Heart left ventricle (tissue), 16 donors: ENCODE measurements at regions of chr3 and their contacts with region 1.

Region 1: DNA sequence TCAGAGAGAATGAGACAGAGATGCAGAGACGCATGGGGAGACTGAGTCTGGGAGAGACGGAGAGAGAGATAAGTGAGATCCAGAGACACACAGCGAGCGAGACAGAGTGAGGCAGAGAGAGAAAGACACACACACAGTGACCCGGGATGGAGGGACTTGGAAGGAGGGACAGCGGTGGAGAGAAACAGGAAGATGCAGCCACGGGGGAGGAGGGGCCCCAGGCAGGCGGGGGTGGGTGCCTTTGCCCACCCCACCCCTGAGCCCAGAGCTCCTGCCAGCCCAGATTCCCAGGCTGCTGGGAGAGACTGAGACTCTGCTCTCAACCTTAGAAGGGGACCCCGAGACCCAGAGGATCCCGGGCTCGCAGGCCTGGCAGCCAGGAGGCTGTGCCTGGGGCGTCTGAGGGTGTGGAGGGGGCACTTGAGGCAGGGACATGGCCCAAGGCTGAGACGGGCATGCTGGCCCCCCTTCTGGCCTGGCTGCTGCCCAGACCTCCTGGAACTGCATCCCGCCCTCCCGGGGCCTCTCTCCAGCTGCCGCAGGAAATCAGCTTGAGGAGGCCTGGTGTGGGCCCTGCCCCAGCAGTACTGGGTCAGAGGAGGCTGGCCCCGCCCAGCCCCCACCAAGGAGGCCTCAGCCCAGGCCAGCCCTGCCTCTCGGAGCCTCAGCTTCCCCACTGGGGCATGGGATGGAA is 18.1 kb downstream of the H1-8 start:
- DNase-seq: peak; percentile 86 to 94 (median 89)
- ATAC-seq: peak; percentile 73 to 88 (median 81)
- H3K4me3 ChIP-seq: peak overlapping the region in 2 of 12 donors; percentile 1 to 8
- H3K27ac ChIP-seq: peak overlapping the region; percentile 74 to 90 (median 80)
- H3K4me1 ChIP-seq: peaks cover 19 to 97% (median 71%) of the 10 kb centered on the region in 12 donors
- H3K27me3 ChIP-seq: no peaks in the 10 kb centered on the region
- CTCF ChIP-seq: no peak
- POLR2A ChIP-seq: no peak

Region 2: GRCh38 chr3:129596194-129597086 is 35.4 kb after region 1 on chr3:
- intact Hi-C with region 1: loop called in 6 of 10 experiments (anchors 5 kb)
- DNase-seq: peak; percentile 93 to 96 (median 94)
- ATAC-seq: peak; percentile 70 to 86 (median 83)
- H3K4me3 ChIP-seq: peak overlapping the region in 11 of 12 donors; percentile 7 to 99 (median 34)
- H3K27ac ChIP-seq: peak overlapping the region; percentile 75 to 97 (median 90)
- H3K4me1 ChIP-seq: peaks cover 31 to 100% (median 95%) of the 10 kb centered on the region in 12 donors
- H3K27me3 ChIP-seq: no peaks in the 10 kb centered on the region
- CTCF ChIP-seq: peak in 2 of 12 donors; percentile 1 to 5
- POLR2A ChIP-seq: no peak

Region 3: GRCh38 chr3:129606636-129607390 is 45.8 kb after region 1 on chr3 and contains the start of gene PLXND1:
- intact Hi-C with region 1: loop called in 6 of 10 experiments (anchors 5 kb)
- DNase-seq: peak; percentile 84 to 92 (median 86)
- ATAC-seq: peak; percentile 35 to 75 (median 68)
- H3K4me3 ChIP-seq: peak within 1 kb of the TSS; percentile 61 to 99 (median 82)
- H3K27ac ChIP-seq: peak within 1 kb of the TSS; percentile 88 to 98 (median 96)
- H3K4me1 ChIP-seq: peaks cover 21 to 86% (median 60%) of the 10 kb centered on the region in 12 donors
- H3K27me3 ChIP-seq: peaks cover 0 to 12% (median 3%) of the 10 kb centered on the region in 9 donors
- CTCF ChIP-seq: no peak
- POLR2A ChIP-seq: peak in 1 of 2 donors; percentile 60
- total RNA-seq, gene PLXND1: 40.8 to 218 (median 64.9) TPM

Region 4: GRCh38 chr3:130014526-130014925 is 453.5 kb after region 1 on chr3:
- intact Hi-C with region 1: no loop called
- DNase-seq: no peak
- ATAC-seq: no peak
- H3K4me3 ChIP-seq: no peak overlapping the region
- H3K27ac ChIP-seq: no peak overlapping the region
- H3K4me1 ChIP-seq: no peaks in the 10 kb centered on the region
- H3K27me3 ChIP-seq: peaks cover 0 to 4% (median 0%) of the 10 kb centered on the region in 9 donors
- CTCF ChIP-seq: no peak
- POLR2A ChIP-seq: no peak